Posterior cingulate gyrus (tissue), 11 donors: ENCODE measurements at regions of chr5 and their contacts with region 1.

Region 1: DNA sequence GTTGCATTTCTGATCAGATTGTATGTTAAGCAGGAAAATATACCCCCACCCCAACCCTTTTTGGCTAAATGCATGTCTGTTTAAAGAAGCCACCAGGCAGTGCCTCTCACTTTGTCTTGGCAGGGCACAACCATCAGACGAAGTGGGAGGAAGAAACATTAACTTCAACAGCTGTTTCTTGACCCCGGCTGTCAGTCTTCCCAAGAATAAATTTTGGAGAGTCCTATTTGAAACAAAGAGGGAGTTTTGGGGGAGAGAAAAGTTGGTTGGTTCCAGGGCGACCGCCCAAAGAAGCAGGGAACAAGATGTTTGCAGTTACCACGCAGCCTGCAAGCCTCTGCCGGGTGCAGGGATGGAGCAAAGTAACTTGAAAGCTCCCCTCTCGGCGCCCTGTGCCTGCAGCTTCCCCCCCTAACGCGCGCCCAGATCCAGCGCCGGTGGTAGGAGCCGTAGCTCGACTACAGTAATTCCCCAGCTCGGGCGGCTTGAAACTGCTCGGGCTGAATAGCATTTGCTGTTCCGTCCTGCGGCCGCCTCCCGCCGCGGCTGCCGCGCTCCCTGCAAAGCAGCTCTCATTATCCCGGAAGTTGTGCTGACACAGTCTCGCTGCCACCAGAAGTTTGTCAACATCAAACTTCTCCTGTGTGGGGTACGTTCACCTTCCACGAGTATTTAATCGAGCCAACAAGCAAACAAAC is 100.7 kb upstream of the SSBP2 start:
- DNase-seq: peak; percentile 93 to 100 (median 96)

Region 2: GRCh38 chr5:81425569-81425968 is 426.1 kb before region 1 on chr5:
- intact Hi-C with region 1: loop called (anchors 5 kb)
- DNase-seq: no peak

Region 3: GRCh38 chr5:81506900-81507588 is 344.6 kb before region 1 on chr5:
- intact Hi-C with region 1: loop called (anchors 5 kb)
- DNase-seq: peak in 4 of 10 donors; percentile 34 to 50 (median 42)

Region 4: GRCh38 chr5:81751009-81751835 is 100.4 kb before region 1 on chr5 and contains the start of gene SSBP2:
- intact Hi-C with region 1: loop called (anchors 1 kb)
- DNase-seq: peak; percentile 99 to 100 (median 100)

Region 5: DNA sequence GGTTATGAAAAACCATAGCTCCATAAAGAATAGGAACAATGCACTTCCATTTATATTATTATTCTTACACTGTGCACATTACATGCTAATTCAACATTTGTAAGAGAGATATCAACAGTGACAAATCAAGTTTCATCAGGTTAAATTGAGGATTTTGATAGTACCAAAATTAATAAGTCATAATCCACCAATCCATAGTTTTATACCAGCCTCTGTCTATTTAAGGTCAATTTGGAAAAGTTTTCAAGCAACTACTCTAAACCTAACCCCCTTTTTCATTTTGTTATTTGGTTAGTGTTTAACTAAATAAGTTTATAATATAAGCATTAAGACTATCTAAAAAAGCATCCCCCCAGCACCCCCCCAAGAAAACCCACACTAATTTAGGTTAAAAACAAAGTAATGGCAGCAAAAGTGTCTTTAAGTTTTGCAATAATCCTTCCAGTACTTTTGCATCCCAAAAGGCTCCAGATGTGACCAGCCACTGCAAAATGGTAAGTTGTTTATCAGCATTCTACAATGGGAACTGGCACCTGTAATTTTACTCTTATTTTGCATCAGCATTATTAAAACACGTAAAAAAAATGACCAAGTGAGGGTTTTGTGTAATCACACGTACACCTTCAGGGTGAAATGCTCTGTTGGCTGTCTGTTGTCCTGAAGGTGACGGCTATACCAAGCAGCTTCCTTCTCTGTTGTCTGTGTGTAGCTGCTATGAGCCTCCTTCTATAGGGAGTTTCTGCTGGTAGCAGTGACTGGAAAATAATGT is 64.0 kb before region 1 on chr5:
- intact Hi-C with region 1: loop called (anchors 1 kb)
- DNase-seq: peak in 3 of 10 donors; percentile 24 to 34 (median 27)

Region 6: DNA sequence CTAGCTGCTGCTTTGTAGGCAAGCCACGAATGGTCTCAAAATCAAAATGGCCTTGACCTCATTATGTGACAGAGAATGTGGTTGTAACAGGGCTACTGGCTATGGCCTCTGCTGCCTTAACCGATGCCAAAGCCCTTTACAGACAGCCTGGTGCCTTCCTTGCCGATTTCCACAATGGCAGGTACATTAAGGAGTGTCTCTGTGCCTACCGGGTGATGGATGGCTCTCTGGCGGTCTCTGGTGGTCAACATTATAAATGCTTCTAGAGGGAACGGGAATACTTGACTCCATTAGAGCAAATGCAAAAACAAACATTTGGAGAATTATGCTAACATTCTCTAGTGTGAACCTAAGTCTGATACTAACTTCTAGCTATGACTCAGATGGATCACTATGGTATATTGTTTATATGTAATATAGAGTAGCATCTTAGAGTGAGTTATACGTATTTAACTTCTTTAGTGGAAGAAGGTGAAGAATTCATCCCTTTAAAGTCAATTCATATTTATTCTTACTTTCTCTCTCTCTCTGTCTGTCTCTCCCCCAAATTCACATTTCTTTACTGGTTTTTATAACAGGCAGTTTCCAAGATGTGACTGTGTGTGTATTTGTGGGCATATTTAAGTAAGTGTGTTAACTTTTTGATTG is 374.0 kb after region 1 on chr5:
- intact Hi-C with region 1: loop called (anchors 10 kb)
- DNase-seq: peak; percentile 18 to 90 (median 60)